Activated CD4-positive, alpha-beta memory T cell treated with anti-CD3 and anti-CD28 coated beads, Interleukin-2, amount 10 ng/mL, durations not matched to agents 7 days and 5 days (primary cell): ENCODE measurements at regions of chr17 and their contacts with region 1.

Region 1: DNA sequence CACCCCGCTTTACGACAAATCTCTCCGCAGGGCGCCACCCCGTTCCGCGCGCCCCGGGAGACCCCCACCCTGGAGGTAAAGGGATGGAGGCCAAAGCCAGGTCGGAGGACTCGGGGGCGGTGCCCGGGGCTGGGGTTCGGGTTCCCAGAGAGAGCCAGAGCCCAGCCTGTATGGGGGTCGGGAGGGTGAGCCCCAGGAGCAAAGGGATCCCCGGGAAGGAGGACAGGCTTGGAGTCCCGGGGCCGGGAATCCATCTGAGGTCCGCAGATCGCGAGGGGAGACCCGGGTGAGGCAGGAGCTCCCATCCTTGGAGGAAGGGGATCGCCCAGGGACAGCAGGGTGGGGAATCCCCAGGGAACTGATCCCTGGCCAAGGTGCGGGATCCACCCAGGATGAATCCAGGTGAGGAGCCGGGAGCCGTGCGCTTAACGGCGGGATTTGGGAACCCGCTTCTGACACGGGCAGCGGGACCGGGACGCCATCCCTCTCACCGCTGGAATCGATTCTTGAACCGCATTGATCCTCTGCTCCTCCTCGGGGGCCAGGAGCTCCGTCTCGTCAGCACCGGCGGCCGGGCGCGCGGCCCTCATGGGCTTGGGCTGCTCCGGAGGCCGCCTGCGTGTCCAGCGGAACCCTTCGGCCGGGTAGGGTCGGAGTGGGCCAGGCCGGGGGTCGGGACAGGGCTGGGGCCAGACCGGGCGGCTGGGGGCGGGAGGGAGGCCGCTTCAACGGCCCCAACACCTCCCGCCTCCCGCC is at the start of gene MMD:
- DNase-seq: peak; percentile 31
- H3K4me3 Mint-ChIP-seq: peak within 1 kb of the TSS; percentile 90
- H3K27ac Mint-ChIP-seq: peak within 1 kb of the TSS; percentile 98
- H3K4me1 Mint-ChIP-seq: peaks cover 44% of the 10 kb centered on the region
- H3K27me3 Mint-ChIP-seq: peaks cover 27% of the 10 kb centered on the region
- total RNA-seq, gene MMD: 29.6 to 30.8 TPM

Region 2: DNA sequence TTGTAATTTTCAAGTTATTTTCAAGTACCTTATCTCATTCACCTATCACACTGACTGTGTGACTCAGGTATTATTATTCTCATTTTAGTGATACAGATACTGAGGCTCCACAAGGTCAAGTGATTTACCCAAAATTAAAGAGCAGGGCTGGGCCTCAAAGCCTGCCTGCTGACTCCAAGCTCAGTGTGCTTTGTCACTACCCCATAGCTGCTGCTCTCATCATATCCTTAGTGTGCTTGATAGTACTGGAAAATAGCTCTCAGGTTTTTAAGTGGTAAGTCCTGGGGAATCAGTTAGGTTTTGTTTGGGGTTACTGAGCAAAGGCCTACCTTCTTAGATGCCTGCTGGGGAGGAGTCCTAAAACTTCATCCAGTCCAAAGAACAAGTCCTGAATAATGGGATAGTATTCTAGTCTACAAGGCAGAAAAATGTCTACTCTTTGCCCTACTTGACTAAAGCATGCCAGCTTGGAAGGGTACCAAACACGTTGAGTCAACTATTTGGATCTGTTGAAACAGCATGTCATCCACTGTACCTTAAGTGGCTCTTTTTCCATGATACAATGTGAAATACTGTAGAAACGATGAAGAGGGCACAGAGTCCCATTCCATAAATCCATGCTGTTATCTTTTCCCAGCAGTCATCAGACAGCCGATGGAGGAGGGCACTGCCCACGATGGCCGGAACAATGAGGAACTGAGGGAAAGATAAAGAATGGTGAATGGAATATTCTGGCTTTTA is 10.5 kb before region 1 on chr17:
- CTCF ChIA-PET with region 1: no interaction called
- POLR2A ChIA-PET with region 1: interaction called, 15 read pairs
- DNase-seq: no peak
- H3K4me3 Mint-ChIP-seq: no peak overlapping the region
- H3K27ac Mint-ChIP-seq: no peak overlapping the region
- H3K4me1 Mint-ChIP-seq: peaks cover 15% of the 10 kb centered on the region
- H3K27me3 Mint-ChIP-seq: no peaks in the 10 kb centered on the region